Aorta (tissue), 5 donors: ENCODE measurements at regions of chr3 and their contacts with region 1.

Region 1: GRCh38 chr3:141477224-141477623 is 9.6 kb upstream of the RASA2 start:
- DNase-seq: no peak
- ATAC-seq: no peak
- H3K4me3 ChIP-seq: no peak overlapping the region
- H3K27ac ChIP-seq: no peak overlapping the region
- H3K4me1 ChIP-seq: no peaks in the 10 kb centered on the region
- H3K27me3 ChIP-seq: no peaks in the 10 kb centered on the region

Region 2: DNA sequence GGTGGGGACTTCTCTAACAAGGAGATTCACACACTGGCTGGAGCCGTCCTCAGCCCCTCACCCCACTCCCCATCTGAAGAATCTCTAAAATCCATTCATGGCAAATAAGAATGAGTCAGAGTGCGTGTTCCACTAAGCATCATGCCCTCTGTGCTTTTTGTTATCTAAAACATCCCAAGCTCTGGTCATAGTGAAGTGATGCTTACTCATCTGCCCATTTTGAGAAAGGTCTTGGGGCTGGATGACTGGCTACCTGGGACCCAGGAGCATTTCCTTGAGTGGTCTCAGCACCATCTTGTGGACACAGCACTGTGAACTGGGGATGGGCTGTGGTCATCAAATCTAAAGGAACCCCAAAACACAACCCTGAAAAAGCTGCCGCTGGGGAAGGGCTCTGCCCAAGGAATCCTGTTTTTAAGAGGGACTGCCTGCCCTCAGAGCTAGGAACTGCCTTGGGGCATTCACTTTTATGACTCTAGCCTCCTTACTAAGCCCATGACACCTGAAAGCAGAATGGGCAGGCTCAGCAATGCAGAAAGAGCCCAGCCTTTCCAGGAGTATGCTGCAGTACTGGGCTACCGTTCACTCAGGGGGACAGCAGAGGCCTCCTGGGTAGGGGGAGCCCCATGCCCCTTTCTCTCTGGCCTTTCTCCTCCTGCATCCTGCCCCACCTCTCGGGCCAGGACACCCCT is 55.4 kb before region 1 on chr3:
- intact Hi-C with region 1: no loop called
- DNase-seq: no peak
- ATAC-seq: no peak
- H3K4me3 ChIP-seq: no peak overlapping the region
- H3K27ac ChIP-seq: peak overlapping the region in 1 of 2 donors; percentile 6
- H3K4me1 ChIP-seq: peaks cover 0 to 5% of the 10 kb centered on the region in 2 donors
- H3K27me3 ChIP-seq: no peaks in the 10 kb centered on the region

Region 3: GRCh38 chr3:141519587-141519986 is 42.4 kb after region 1 on chr3:
- intact Hi-C with region 1: loop called in 1 of 2 experiments (anchors 2 kb)
- DNase-seq: no peak
- ATAC-seq: no peak
- H3K4me3 ChIP-seq: no peak overlapping the region
- H3K27ac ChIP-seq: no peak overlapping the region
- H3K4me1 ChIP-seq: no peaks in the 10 kb centered on the region
- H3K27me3 ChIP-seq: no peaks in the 10 kb centered on the region